Right ventricle myocardium superior (tissue), 1 donor: ENCODE measurements at regions of chr9 and their contacts with region 1.

Region 1: DNA sequence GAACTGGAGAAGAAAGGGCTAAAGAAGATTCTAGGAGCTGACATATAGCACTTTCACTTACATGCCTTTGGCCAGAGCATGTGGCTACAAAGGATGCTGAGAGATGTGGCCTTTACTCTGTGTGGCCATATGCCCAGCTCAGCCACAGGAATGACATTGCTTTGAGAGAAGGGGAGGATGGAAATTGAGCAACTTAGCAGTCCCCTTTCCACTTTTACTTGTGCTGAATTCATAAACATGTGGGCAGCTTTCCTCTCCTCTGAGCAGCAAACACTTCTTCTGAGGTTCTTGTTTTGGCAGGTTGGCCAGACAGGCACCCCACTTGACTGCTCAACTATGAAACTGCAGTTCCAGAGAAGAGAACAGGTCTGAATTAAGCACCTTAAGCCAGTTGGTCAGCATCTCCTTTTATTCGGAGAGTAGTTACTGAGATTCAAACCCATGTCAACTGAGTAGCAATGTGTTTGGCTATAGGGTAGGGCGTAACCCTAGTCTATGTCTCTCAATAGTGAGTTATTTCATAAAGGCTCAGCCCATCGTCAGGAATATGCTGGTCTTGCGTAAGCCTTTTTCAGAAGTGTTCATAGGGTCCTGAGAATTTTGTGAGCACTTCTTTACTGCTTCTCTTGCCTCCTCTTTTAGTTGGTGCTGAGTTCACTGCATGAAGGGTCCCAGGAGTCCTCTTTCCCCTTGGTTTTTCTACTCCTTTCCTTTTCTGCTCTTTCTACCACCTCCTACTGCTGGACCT is 134.5 kb downstream of the PALM2AKAP2 start:
- DNase-seq: no peak
- ATAC-seq: no peak

Region 2: DNA sequence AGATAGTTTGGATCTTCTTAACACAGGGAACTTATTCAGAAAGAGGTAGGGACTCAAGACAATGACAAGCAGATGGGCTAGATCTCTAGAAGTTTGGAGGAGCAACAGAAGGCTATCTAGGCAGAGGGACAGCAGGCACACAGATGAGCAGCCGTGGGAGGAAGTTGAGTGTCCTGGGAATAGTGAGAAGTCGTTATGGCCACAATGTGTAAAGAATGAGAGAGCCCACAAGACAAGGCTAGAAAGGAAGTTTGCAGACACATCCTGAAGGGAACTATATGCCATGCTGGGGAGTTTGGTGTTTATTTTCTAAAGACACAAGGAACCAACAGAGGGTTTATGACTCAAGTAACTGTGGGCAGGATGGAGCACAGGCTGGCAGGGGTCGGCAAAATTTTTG is 26.1 kb after region 1 on chr9:
- intact Hi-C with region 1: no loop called
- DNase-seq: no peak
- ATAC-seq: no peak

Region 3: DNA sequence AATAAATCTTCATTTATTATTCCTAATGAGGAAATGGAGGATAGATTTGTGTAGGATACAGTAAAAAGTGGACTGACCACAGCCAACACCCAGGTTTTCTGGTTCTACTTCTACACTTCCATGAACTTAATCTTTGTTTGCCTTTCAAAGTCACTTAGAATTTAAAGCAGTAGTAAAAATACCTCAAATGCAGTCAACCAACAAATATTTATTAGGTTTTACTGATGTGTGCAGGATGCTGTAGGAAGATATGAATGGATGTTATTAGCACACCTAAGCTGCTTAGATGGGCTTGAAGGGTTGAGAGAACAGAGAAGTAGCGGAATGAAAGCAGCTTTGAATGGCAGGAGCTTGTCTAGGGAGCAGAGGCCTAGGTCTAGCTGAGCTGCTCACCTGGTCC is 66.6 kb after region 1 on chr9:
- intact Hi-C with region 1: no loop called
- DNase-seq: no peak
- ATAC-seq: no peak

Region 4: GRCh38 chr9:110040788-110041187 is 126.3 kb after region 1 on chr9:
- intact Hi-C with region 1: no loop called
- DNase-seq: no peak
- ATAC-seq: peak; percentile 32

Region 5: GRCh38 chr9:110064803-110065202 is 150.3 kb after region 1 on chr9:
- intact Hi-C with region 1: loop called (anchors 5 kb)
- DNase-seq: peak; percentile 62
- ATAC-seq: peak; percentile 47